ENCODE measurements at regions of chr3 and their contacts with region 1.

Region 1: GRCh38 chr3:132695422-132695821 is 26.8 kb downstream of the NPHP3 start:
- DNase-seq: no peak
- H3K4me3 ChIP-seq: no peak overlapping the region
- CTCF ChIP-seq: no peak

Region 2: GRCh38 chr3:132522353-132522752 is 173.1 kb before region 1 on chr3:
- in situ Hi-C with region 1: loop called (anchors 25 kb)
- DNase-seq: no peak
- H3K4me3 ChIP-seq: no peak overlapping the region
- CTCF ChIP-seq: no peak

Region 3: DNA sequence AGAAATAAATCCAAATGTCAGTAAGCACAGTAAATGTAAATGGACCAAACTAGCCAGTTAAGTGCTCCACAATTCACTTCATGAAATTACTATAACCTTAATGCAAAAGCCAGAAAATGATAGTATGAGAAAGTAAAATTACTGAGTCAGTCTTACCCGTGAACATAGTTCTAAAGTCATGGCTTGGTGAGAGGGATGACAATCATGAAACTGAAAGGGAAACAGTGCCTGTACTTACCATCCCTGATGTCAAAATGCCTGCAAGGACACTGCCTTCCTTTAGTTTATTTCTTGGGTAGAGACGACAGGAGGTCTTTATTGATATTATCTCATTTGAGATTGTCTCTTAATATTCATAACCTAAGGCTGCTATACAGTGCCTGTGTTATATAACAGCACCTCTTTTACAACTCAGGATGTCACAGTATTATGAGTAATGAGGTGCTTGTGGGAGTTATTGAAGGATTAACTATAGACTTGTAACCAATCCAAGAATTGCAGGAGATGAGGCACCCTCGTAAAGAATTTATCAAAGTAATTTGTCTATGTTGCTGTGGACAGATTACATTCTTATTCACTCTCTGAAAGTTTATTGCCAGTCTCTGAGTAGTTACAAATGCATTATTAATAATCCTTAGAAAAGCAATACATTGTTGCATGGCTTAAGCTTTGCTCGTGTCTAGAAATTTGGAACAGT is 561.5 kb after region 1 on chr3:
- in situ Hi-C with region 1: no loop called
- DNase-seq: no peak
- H3K4me3 ChIP-seq: no peak overlapping the region
- CTCF ChIP-seq: no peak